Cardiac septum (tissue), 1 donor: ENCODE measurements at regions of chr4 and their contacts with region 1.

Region 1: DNA sequence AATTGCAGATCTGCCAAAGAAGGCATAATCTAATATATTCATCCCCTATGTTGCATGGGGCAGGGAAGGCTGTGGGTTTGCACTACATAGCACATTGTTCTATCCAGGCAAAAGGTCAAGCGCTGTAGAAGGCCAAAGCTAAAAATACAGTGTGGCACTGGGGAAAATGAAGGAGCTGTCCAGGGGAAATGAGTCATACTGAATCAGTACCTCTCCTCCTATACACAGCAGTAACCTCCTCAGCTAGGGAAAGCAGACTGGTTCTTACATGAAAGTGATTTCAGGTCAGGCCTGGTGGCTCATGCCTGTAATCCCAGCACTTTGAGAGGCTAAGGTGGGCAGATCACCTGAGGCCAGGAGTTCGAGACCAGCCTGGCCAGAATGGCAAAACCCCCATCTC is 31.0 kb upstream of the SLC25A4 start:
- DNase-seq: no peak

Region 2: DNA sequence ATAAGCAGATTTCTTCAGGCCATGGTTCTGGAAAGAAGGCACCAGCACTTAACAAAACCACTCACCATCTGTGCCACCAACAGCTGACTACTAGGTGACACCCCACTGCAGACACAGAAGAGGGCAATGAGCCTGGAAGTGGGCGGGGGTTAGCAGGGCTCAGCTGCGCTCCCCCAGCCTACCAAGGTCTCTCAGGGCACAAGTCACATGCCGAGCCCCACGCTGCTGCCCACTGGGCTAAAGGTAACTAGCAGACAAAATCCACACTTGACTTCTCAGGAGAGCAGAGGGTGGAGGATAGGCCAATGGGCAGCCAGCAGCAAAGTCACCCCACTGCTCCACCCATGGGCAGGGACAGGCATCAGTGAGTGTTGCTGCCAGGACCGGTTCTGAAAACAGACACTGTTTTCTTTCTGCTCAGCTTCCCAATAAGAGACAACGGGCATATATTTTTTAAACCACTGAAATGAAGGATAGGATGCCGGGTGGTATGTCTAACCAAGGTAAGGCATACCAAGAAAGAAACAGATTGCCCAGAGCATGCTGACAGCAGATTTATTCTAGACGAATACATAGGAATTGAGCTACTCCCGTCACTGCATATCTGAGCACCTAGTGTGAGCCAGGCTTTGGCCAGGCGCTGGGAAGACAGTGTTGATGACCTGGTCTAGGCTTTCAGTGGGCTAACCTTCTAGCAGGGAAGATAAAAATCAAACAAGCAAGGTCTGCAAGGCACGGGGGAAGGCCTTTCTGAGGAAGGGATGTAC is 306.5 kb before region 1 on chr4:
- intact Hi-C with region 1: loop called (anchors 5 kb)
- DNase-seq: peak; percentile 93

Region 3: GRCh38 chr4:186249785-186250754 is 1138.0 kb after region 1 on chr4:
- intact Hi-C with region 1: no loop called
- DNase-seq: no peak